Pancreas (tissue), 10 donors: ENCODE measurements at regions of chr3 and their contacts with region 1.

Region 1: DNA sequence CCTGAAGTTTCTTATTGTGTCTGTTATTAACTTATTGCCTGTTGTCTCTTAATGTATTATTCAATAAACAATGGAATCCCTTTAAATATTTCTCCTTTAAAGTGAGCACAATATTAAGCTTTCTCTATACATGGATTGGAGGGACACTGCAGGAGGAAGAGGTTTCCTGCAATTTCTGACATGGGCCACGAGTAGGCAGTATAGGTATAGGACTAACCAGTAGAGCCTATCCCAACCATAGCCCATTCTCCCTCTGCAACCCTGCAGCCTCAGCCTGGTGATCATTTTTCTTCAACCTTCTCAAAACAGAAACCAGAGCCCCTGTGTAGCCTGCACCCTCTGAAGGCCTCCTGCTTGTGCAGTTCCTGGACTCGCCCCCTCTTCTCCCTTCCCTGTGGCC is 124.8 kb downstream of the NEK10 start:
- DNase-seq: no peak
- ATAC-seq: no peak
- H3K4me3 ChIP-seq: no peak overlapping the region
- H3K27ac ChIP-seq: no peak overlapping the region
- H3K4me1 ChIP-seq: no peaks in the 10 kb centered on the region
- H3K27me3 ChIP-seq: no peaks in the 10 kb centered on the region
- CTCF ChIP-seq: no peak

Region 2: DNA sequence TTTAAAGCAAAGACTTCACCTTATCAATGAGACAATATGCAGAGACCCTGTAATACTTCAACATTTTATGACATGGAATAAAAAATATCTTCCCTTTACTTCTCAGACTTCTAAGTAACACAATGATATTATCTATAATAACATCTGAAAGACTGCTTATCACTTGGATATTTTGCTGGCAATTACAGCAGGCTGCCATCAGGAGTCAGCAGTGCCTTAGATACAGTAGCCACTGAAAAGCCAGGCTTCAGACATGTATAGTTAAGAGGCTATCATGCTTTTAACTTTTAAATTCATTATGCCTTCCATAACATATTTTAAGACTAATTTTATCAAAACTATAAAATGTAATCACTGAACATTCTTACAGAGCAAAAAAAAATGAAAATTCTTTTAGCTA is 102.7 kb before region 1 on chr3:
- intact Hi-C with region 1: loop called in 1 of 3 experiments (anchors 10 kb)
- DNase-seq: no peak
- ATAC-seq: no peak
- H3K4me3 ChIP-seq: no peak overlapping the region
- H3K27ac ChIP-seq: no peak overlapping the region
- H3K4me1 ChIP-seq: no peaks in the 10 kb centered on the region
- H3K27me3 ChIP-seq: no peaks in the 10 kb centered on the region
- CTCF ChIP-seq: no peak